ENCODE measurements at regions of chr9 and their contacts with region 1.

Region 1: GRCh38 chr9:133485361-133486260 is 6.7 kb upstream of the SLC2A6 start:
- DNase-seq: no peak
- H3K4me3 ChIP-seq: no peak overlapping the region
- H3K27ac ChIP-seq: no peak overlapping the region
- H3K4me1 ChIP-seq: no peaks in the 10 kb centered on the region
- H3K27me3 ChIP-seq: no peaks in the 10 kb centered on the region
- CTCF ChIP-seq: no peak

Region 2: GRCh38 chr9:133023117-133023890 is 462.3 kb before region 1 on chr9:
- CTCF ChIA-PET with region 1: no interaction called
- dilution Hi-C with region 1: no loop called
- in situ Hi-C with region 1: loop called in 1 of 2 experiments (anchors 10 kb)
- intact Hi-C with region 1: loop called (anchors 2 kb)
- DNase-seq: no peak
- H3K4me3 ChIP-seq: no peak overlapping the region
- H3K27ac ChIP-seq: no peak overlapping the region
- H3K4me1 ChIP-seq: no peaks in the 10 kb centered on the region
- H3K27me3 ChIP-seq: no peaks in the 10 kb centered on the region
- CTCF ChIP-seq: no peak

Region 3: GRCh38 chr9:133356391-133357091 is 129.1 kb before region 1 on chr9 and contains the starts of genes SURF1 and SURF2:
- CTCF ChIA-PET with region 1: interaction called, 4 read pairs
- dilution Hi-C with region 1: no loop called
- in situ Hi-C with region 1: no loop called
- intact Hi-C with region 1: loop called (anchors 1 kb)
- DNase-seq: peak; percentile 76
- H3K4me3 ChIP-seq: peak within 1 kb of the TSS; percentile 66 to 97 (median 70)
- H3K27ac ChIP-seq: peak within 1 kb of the TSS; percentile 40
- H3K4me1 ChIP-seq: peaks cover 16% of the 10 kb centered on the region
- H3K27me3 ChIP-seq: no peaks in the 10 kb centered on the region
- CTCF ChIP-seq: peak; percentile 7 to 40
- total RNA-seq, gene SURF1: 17.5 to 23.4 TPM
- total RNA-seq, gene SURF2: 22.5 to 42.2 TPM

Region 4: GRCh38 chr9:133417541-133418461 is 67.8 kb before region 1 on chr9 and contains the start of gene REXO4:
- CTCF ChIA-PET with region 1: no interaction called
- dilution Hi-C with region 1: loop called (anchors 5 kb)
- in situ Hi-C with region 1: no loop called
- intact Hi-C with region 1: no loop called
- DNase-seq: peak; percentile 87
- H3K4me3 ChIP-seq: peak within 1 kb of the TSS; percentile 80 to 95 (median 93)
- H3K27ac ChIP-seq: peak within 1 kb of the TSS; percentile 64
- H3K4me1 ChIP-seq: peaks cover 12% of the 10 kb centered on the region
- H3K27me3 ChIP-seq: no peaks in the 10 kb centered on the region
- CTCF ChIP-seq: no peak
- total RNA-seq, gene REXO4: 14.8 to 33.1 TPM

Region 5: DNA sequence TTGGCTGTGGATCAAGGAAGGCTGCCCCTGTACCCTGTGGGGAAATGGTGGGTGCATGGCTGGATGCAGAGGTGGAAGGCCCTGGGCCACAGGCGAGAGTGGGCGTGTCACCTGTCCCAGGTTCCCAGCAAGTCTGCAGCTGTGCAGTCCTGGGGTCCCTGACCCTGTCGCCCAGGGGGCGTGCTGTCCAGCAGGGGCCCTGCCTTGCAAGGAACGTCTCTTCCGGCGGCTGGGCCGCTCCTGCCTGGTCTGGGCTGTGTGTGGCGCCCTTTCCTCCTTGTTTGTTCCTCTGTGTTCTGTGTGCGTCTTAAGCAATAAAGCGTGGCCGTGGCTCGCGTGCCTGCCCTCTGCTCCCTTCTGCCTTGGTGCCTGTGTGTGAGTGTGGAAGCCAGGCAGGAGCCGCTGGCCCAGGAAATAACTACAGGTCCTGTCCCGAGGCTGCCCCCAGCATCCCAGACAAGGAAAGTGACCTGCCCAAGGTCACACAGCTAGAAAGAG is 15.1 kb before region 1 on chr9:
- CTCF ChIA-PET with region 1: no interaction called
- dilution Hi-C with region 1: no loop called
- in situ Hi-C with region 1: no loop called
- intact Hi-C with region 1: no loop called
- DNase-seq: no peak
- H3K4me3 ChIP-seq: no peak overlapping the region
- H3K27ac ChIP-seq: no peak overlapping the region
- H3K4me1 ChIP-seq: no peaks in the 10 kb centered on the region
- H3K27me3 ChIP-seq: no peaks in the 10 kb centered on the region
- CTCF ChIP-seq: no peak